Aorta (tissue), 5 donors: ENCODE measurements at regions of chr22 and their contacts with region 1.

Region 1: DNA sequence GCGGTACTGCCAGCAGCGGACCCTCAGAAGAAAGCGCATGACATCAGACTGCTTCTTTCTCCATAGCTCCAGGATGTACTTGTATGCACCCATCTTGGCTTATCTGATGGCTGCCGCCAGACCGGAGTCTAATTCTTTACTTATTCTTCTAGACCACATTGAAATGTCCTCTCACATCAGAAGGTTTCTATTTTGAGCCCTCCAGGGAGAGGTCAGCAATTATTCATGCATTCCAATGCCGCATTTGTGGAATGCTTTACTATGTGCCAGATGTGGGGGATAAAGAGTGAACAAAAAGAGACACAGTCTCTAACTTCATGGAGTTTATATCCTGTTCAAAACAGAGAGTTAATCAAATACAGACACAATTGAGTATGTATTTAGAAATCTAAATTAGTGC is 230.1 kb downstream of the MIAT start:
- DNase-seq: no peak
- ATAC-seq: peak; percentile 37
- H3K4me3 ChIP-seq: no peak overlapping the region
- H3K27ac ChIP-seq: peak overlapping the region in 1 of 2 donors; percentile 90
- H3K4me1 ChIP-seq: peaks cover 2 to 12% of the 10 kb centered on the region in 2 donors
- H3K27me3 ChIP-seq: no peaks in the 10 kb centered on the region

Region 2: DNA sequence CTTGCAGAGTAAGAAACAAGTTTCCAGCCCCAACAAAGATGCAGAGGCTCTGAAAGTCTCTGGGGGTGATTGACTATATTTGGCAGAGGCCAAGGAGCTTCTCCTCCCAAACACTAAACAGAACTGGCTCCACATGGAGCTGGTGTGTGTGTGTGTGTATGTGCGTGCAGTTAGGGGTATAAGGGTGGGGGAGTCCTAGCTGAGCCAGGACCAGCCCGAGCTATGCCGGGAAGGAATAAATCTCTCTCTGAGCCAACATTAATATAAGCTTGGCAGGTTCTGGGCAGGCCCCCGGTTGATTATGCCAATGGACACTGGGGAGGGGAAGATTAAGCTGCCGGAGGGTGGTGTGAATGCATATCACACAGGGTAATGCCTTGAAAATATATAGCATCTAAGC is 94.1 kb after region 1 on chr22:
- intact Hi-C with region 1: loop called in 1 of 2 experiments (anchors 5 kb)
- DNase-seq: peak; percentile 70 to 79
- ATAC-seq: peak; percentile 84
- H3K4me3 ChIP-seq: no peak overlapping the region
- H3K27ac ChIP-seq: peak overlapping the region in 1 of 2 donors; percentile 10
- H3K4me1 ChIP-seq: peaks cover 0 to 3% of the 10 kb centered on the region in 2 donors
- H3K27me3 ChIP-seq: no peaks in the 10 kb centered on the region

Region 3: GRCh38 chr22:27019827-27020226 is 132.4 kb after region 1 on chr22:
- intact Hi-C with region 1: loop called (anchors 5 kb)
- DNase-seq: peak; percentile 57 to 80
- ATAC-seq: peak; percentile 62
- H3K4me3 ChIP-seq: no peak overlapping the region
- H3K27ac ChIP-seq: peak overlapping the region; percentile 86
- H3K4me1 ChIP-seq: no peaks in the 10 kb centered on the region
- H3K27me3 ChIP-seq: no peaks in the 10 kb centered on the region

Region 4: DNA sequence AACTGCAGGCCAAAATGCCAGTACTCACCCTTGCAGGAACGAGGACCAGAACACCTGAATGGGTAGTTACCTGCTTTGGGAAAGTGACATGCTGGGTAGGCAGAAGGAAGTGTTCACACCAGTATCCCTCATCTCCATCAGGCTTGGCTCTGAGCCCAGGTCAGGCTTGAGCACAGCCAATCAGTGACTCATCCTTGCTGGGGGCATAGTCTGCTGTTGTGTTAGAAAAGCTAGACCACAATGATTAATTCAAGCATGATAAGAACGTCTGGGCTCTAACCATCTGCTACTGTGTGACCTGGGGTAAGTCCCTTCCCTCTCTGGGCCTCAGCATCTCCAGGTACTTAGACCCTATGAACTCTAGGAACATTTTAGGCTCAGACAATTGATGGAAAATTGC is 220.4 kb after region 1 on chr22:
- intact Hi-C with region 1: loop called in 1 of 2 experiments (anchors 5 kb)
- DNase-seq: peak; percentile 86 to 92
- ATAC-seq: peak; percentile 49
- H3K4me3 ChIP-seq: no peak overlapping the region
- H3K27ac ChIP-seq: peak overlapping the region in 1 of 2 donors; percentile 69
- H3K4me1 ChIP-seq: peaks cover 8 to 13% of the 10 kb centered on the region in 2 donors
- H3K27me3 ChIP-seq: no peaks in the 10 kb centered on the region

Region 5: DNA sequence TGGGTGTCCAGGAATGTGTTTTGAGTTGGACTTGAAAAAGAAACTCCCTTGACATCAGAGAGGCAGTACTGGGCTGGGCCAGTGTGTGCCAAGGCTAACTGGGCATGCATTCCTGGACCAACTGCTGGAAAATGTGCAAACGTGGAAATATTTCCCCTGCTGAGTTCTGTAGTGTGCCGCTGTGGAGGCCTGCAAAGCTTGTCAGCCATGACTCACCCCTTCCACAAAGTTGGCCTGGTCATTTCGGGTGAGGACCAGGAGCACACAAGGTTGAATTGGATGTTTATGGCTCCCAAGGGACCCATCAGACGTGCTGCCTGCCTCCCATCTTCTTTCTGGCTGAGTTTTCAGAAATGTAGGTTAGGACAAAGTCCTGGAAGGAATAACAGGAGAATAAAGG is 283.0 kb after region 1 on chr22:
- intact Hi-C with region 1: loop called in 1 of 2 experiments (anchors 1 kb)
- DNase-seq: peak; percentile 87 to 90
- ATAC-seq: peak; percentile 91
- H3K4me3 ChIP-seq: no peak overlapping the region
- H3K27ac ChIP-seq: peak overlapping the region in 1 of 2 donors; percentile 87
- H3K4me1 ChIP-seq: peaks cover 0 to 3% of the 10 kb centered on the region in 2 donors
- H3K27me3 ChIP-seq: no peaks in the 10 kb centered on the region